ENCODE measurements at regions of chr19 and their contacts with region 1.

Region 1: DNA sequence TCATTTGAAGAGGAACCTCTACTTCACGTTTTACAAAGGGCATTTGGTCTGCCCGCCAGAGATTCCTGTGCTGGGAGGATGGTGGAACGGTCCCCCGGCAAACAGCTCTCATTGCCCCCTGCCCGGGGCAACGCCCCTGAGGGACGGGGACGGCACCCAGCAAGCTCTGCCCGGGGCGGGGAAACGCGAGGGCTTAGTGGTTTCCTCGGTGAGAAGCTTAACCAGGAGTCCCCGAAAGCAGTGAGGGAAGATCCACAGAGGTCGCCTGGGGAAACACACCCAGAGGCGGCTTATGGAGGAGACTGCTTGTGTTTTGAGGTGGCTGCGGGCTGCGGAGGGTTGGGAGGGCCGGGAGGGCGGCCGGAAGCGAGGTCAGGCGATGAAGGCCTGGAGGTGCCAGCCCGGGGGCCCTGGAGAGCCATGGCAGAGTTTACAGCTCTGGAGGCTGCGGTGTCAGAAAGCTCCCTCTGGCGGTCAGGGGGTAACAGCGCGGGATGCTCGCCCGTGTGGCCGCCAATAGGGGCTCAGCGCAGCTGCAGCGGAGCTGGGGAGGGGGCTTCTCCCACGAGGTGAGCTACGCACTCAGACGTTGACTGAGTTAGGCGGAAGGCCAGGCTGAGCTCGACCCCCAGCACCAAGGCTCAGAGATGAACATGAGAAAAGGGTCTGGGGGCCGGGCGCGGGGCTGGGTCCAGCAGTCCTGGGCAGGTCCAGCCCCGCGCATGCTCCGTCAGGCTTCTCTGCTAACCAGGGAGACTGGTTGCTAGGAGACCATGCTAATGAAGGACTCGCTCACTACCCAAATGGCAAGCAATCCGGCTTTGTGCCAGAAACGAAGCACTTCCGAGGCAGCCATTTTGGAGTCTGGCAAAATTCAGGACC is 652 bp upstream of the TPGS1 start:
- DNase-seq: peak; percentile 96 to 99
- ATAC-seq: peak; percentile 89 to 95 (median 93)
- H3K4me3 ChIP-seq: peak overlapping the region; percentile 63 to 100 (median 94)
- H3K27ac ChIP-seq: peak overlapping the region; percentile 78 to 98 (median 95)
- H3K4me1 ChIP-seq: peaks cover 4 to 45% (median 33%) of the 10 kb centered on the region in 9 donors
- H3K27me3 ChIP-seq: peaks cover 0 to under 1% (median 0%) of the 10 kb centered on the region in 7 donors
- CTCF ChIP-seq: peak; percentile 92 to 100 (median 99)

Region 2: GRCh38 chr19:531009-531752 is 24.5 kb after region 1 on chr19:
- intact Hi-C with region 1: loop called in 1 of 10 experiments (anchors 2 kb)
- DNase-seq: peak; percentile 78 to 89
- ATAC-seq: peak; percentile 46 to 89 (median 74)
- H3K4me3 ChIP-seq: peak overlapping the region; percentile 76 to 100 (median 93)
- H3K27ac ChIP-seq: peak overlapping the region; percentile 95 to 100 (median 98)
- H3K4me1 ChIP-seq: peaks cover 16 to 39% (median 35%) of the 10 kb centered on the region in 9 donors
- H3K27me3 ChIP-seq: peaks cover 0 to 8% (median 0%) of the 10 kb centered on the region in 7 donors
- CTCF ChIP-seq: peak in 2 of 9 donors; percentile 9 to 25

Region 3: GRCh38 chr19:572140-572742 is 65.6 kb after region 1 on chr19 and contains the start of gene BSG:
- intact Hi-C with region 1: loop called in 1 of 10 experiments (anchors 2 kb)
- DNase-seq: peak; percentile 98
- ATAC-seq: peak; percentile 69 to 87 (median 83)
- H3K4me3 ChIP-seq: peak within 1 kb of the TSS; percentile 74 to 100 (median 96)
- H3K27ac ChIP-seq: peak within 1 kb of the TSS; percentile 85 to 98 (median 96)
- H3K4me1 ChIP-seq: peaks cover 19 to 59% (median 51%) of the 10 kb centered on the region in 9 donors
- H3K27me3 ChIP-seq: no peaks in the 10 kb centered on the region
- CTCF ChIP-seq: no peak
- total RNA-seq, gene BSG: 1,225 to 2,457 (median 1,705) TPM

Region 4: GRCh38 chr19:796692-797527 is 290.3 kb after region 1 on chr19 and contains the start of gene PTBP1:
- intact Hi-C with region 1: loop called in 1 of 10 experiments (anchors 5 kb)
- DNase-seq: peak; percentile 99 to 100
- ATAC-seq: peak; percentile 87 to 95 (median 92)
- H3K4me3 ChIP-seq: peak within 1 kb of the TSS; percentile 61 to 95 (median 86)
- H3K27ac ChIP-seq: peak within 1 kb of the TSS; percentile 90 to 100 (median 98)
- H3K4me1 ChIP-seq: peaks cover 30 to 57% (median 54%) of the 10 kb centered on the region in 9 donors
- H3K27me3 ChIP-seq: no peaks in the 10 kb centered on the region
- CTCF ChIP-seq: peak in 7 of 9 donors; percentile 14 to 48 (median 29)
- total RNA-seq, gene PTBP1: 46.2 to 106 (median 56.8) TPM

Measured in heart right ventricle (tissue), 16 donors.